ENCODE measurements at regions of chr10 and their contacts with region 1.

Region 1: GRCh38 chr10:89001024-89001728 is 10.6 kb downstream of the FAS start:
- DNase-seq: no peak
- H3K4me3 Mint-ChIP-seq: peak overlapping the region; percentile 58
- H3K27ac Mint-ChIP-seq: peak overlapping the region; percentile 66
- H3K4me1 Mint-ChIP-seq: peaks cover 65% of the 10 kb centered on the region
- H3K27me3 Mint-ChIP-seq: no peaks in the 10 kb centered on the region

Region 2: GRCh38 chr10:88828310-88828709 is 172.9 kb before region 1 on chr10:
- intact Hi-C with region 1: loop called (anchors 2 kb)
- DNase-seq: no peak
- H3K4me3 Mint-ChIP-seq: no peak overlapping the region
- H3K27ac Mint-ChIP-seq: peak overlapping the region; percentile 21
- H3K4me1 Mint-ChIP-seq: peaks cover 72% of the 10 kb centered on the region
- H3K27me3 Mint-ChIP-seq: no peaks in the 10 kb centered on the region

Region 3: GRCh38 chr10:88960802-88961201 is 40.4 kb before region 1 on chr10:
- intact Hi-C with region 1: loop called (anchors 2 kb)
- DNase-seq: no peak
- H3K4me3 Mint-ChIP-seq: no peak overlapping the region
- H3K27ac Mint-ChIP-seq: peak overlapping the region; percentile 26
- H3K4me1 Mint-ChIP-seq: peaks cover 26% of the 10 kb centered on the region
- H3K27me3 Mint-ChIP-seq: peaks cover 2% of the 10 kb centered on the region

Region 4: GRCh38 chr10:88990384-88991160 is 10.6 kb before region 1 on chr10 and contains the start of gene FAS:
- intact Hi-C with region 1: loop called (anchors 1 kb)
- DNase-seq: peak; percentile 70
- H3K4me3 Mint-ChIP-seq: peak within 1 kb of the TSS; percentile 98
- H3K27ac Mint-ChIP-seq: peak within 1 kb of the TSS; percentile 98
- H3K4me1 Mint-ChIP-seq: peaks cover 59% of the 10 kb centered on the region
- H3K27me3 Mint-ChIP-seq: no peaks in the 10 kb centered on the region
- total RNA-seq, gene FAS: 20.7 and 22.5 TPM in 2 replicates

Region 5: DNA sequence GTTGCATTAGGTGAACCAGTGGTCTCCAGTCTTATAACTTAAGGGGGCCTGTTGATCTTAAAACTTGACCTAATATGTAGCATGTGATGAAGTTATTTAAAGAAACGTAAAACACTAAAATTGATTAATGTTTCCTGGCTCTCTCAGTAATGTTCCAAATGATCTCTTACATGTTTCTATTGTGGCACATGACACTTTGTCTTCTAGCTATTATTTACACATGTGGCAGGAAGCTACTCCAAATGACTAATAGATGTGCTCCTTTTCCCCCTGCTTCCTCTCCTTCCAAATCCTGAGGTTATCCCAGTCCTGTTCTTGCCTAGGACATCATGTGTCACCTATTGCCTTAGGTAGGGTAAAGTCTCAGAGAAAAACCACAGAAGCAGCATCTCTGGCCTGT is 78.8 kb after region 1 on chr10:
- intact Hi-C with region 1: loop called (anchors 5 kb)
- DNase-seq: no peak
- H3K4me3 Mint-ChIP-seq: no peak overlapping the region
- H3K27ac Mint-ChIP-seq: no peak overlapping the region
- H3K4me1 Mint-ChIP-seq: peaks cover 40% of the 10 kb centered on the region
- H3K27me3 Mint-ChIP-seq: no peaks in the 10 kb centered on the region

Region 6: DNA sequence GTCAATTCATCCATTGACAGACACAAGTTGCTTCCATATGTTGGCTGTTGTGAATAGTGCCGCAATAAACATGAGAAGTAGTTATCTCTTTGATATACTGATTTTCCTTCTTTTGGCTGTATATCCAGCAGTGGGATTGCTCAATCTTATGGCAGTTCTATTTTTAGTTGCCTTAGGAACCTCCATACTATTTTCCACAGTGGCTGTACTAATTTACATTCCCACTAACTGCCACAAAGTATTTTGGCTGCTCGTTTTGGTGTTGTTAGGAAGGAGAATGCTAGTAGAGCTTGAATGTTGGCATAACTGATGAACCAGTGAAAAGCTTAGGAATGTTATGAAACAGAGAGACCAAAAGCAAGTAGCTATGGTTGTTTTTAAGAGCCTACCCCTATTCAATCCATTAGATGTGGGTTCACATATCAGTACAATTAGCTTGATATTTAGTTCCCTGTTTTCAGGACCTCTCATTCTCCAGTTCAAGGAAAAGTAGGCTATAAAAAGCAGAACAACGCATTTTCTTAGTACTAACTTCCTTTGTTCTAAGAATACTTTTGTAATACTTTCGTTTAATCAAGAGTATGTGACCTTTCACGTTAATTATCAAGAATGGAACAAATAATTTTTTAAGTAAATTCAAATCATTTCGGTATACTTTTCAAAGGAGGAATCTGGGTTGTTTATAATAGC is 89.7 kb after region 1 on chr10:
- intact Hi-C with region 1: no loop called
- DNase-seq: no peak
- H3K4me3 Mint-ChIP-seq: no peak overlapping the region
- H3K27ac Mint-ChIP-seq: no peak overlapping the region
- H3K4me1 Mint-ChIP-seq: peaks cover 9% of the 10 kb centered on the region
- H3K27me3 Mint-ChIP-seq: no peaks in the 10 kb centered on the region

Region 7: DNA sequence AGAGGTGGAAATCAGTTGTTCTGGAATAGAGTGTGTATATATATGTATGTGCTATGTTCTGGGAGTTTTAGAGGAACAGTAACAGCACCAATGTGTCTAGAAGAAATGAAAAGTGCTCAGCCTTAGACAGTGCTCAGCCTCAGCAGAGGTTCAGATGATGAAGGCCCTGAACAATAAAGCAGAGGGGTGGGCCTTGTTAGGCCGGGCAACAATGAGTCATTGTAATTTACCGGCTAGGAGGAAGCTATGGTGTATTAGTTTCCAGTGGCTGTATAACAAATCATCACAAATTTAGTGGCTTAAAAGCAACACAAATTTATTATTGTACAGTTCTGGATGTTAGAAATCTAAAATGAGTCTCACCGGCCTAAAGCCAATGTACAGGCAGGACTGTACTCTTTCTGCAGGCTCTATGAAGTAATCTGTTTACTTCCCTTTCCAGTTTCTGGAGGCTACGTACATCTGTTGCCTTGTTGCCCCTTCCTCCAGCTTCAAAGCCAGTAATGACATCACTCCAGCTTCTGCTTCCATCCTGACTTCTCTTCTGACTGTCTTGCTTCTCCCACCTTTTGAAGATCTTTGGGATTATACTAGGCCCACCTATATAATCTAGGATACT is 121.4 kb after region 1 on chr10:
- intact Hi-C with region 1: no loop called
- DNase-seq: no peak
- H3K4me3 Mint-ChIP-seq: no peak overlapping the region
- H3K27ac Mint-ChIP-seq: no peak overlapping the region
- H3K4me1 Mint-ChIP-seq: peaks cover 2% of the 10 kb centered on the region
- H3K27me3 Mint-ChIP-seq: peaks cover 34% of the 10 kb centered on the region

Region 8: DNA sequence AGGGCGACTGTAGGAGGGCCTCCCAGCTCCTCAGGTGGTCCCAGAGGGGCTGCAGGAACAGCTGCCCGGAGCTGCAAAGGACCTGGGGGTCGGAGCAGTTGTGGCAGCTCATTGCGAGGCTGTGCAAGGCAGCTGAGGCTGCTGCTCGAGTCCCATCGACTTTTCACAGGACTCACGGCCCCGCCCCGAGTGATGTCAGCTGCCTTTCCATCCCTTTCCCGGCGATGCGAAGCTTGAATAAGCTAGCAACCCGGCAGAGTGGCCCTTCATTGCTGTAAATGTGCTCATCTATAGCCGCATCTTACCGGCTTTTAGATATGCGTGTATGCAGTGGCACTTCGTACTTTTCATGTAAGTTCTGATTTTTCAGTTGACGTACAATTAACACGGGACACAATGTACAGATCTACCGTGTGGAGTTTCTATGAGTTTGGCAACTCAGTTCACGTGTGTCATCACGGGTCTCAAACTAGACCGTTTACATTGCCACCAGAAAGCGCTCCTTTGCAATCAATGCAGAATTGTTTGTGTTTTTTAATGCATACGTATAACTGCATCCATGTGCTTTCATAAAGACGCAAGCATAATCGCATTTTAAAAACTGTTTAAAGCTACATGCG is 206.1 kb after region 1 on chr10 and contains the start of gene CH25H:
- intact Hi-C with region 1: no loop called
- DNase-seq: peak; percentile 26
- H3K4me3 Mint-ChIP-seq: peak within 1 kb of the TSS; percentile 75
- H3K27ac Mint-ChIP-seq: no peak within 1 kb of the TSS
- H3K4me1 Mint-ChIP-seq: peaks cover 16% of the 10 kb centered on the region
- H3K27me3 Mint-ChIP-seq: peaks cover 48% of the 10 kb centered on the region
- total RNA-seq, gene CH25H: not detected in 2 replicates

Measured in activated T-helper 2 cell treated with anti-CD3 and anti-CD28 coated beads, Interferon-gamma antibody, Interleukin-2, Interleukin-4, amounts not matched to agents 10 μg/mL and 5 μg/mL and 100 μg/mL, durations not matched to agents 14 hours and 24 hours and 36 hours (primary cell).